Activated CD4-positive, alpha-beta memory T cell treated with anti-CD3 and anti-CD28 coated beads for 36 hours (primary cell): ENCODE measurements at regions of chr16 and their contacts with region 1.

Region 1: DNA sequence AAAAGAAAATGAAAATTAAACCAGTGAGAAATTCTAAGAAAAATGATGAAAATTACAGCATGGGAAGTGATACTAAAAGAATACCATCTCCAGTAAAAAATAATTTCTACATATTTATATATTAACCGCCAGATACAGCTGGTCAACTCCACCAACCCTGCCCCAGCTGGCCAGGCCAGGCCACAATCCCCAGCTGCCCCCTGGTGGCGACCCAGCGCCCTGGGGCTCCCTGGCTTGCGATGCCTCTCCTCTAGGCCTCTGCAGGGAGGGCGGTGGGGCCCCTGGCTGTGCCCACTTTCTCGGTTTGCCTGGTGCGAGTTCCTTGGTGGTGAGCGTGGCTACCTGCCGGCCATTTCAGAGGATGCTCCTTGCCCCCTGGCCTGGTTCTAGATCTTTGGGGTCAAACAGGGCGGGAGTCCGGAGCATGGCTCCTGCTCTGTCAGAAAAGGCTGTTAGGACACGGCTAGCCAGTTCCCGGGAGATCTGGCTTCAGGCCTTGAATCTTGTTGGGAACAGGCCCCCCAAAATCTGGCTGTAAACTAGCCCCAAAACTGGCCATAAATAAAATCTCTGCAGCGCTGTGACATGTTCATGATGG is 14.5 kb downstream of the GLIS2 start:
- DNase-seq: peak; percentile 79
- H3K4me3 Mint-ChIP-seq: no peak overlapping the region
- H3K27ac Mint-ChIP-seq: no peak overlapping the region
- H3K4me1 Mint-ChIP-seq: peaks cover 6% of the 10 kb centered on the region
- H3K27me3 Mint-ChIP-seq: no peaks in the 10 kb centered on the region

Region 2: GRCh38 chr16:4244254-4245076 is 85.9 kb before region 1 on chr16:
- CTCF ChIA-PET with region 1: no interaction called
- POLR2A ChIA-PET with region 1: no interaction called
- intact Hi-C with region 1: no loop called
- DNase-seq: no peak
- H3K4me3 Mint-ChIP-seq: no peak overlapping the region
- H3K27ac Mint-ChIP-seq: no peak overlapping the region
- H3K4me1 Mint-ChIP-seq: no peaks in the 10 kb centered on the region
- H3K27me3 Mint-ChIP-seq: no peaks in the 10 kb centered on the region

Region 3: GRCh38 chr16:4261557-4262172 is 68.7 kb before region 1 on chr16:
- CTCF ChIA-PET with region 1: interaction called, 14 read pairs
- POLR2A ChIA-PET with region 1: no interaction called
- intact Hi-C with region 1: no loop called
- DNase-seq: peak; percentile 59
- H3K4me3 Mint-ChIP-seq: no peak overlapping the region
- H3K27ac Mint-ChIP-seq: no peak overlapping the region
- H3K4me1 Mint-ChIP-seq: peaks cover 3% of the 10 kb centered on the region
- H3K27me3 Mint-ChIP-seq: no peaks in the 10 kb centered on the region

Region 4: DNA sequence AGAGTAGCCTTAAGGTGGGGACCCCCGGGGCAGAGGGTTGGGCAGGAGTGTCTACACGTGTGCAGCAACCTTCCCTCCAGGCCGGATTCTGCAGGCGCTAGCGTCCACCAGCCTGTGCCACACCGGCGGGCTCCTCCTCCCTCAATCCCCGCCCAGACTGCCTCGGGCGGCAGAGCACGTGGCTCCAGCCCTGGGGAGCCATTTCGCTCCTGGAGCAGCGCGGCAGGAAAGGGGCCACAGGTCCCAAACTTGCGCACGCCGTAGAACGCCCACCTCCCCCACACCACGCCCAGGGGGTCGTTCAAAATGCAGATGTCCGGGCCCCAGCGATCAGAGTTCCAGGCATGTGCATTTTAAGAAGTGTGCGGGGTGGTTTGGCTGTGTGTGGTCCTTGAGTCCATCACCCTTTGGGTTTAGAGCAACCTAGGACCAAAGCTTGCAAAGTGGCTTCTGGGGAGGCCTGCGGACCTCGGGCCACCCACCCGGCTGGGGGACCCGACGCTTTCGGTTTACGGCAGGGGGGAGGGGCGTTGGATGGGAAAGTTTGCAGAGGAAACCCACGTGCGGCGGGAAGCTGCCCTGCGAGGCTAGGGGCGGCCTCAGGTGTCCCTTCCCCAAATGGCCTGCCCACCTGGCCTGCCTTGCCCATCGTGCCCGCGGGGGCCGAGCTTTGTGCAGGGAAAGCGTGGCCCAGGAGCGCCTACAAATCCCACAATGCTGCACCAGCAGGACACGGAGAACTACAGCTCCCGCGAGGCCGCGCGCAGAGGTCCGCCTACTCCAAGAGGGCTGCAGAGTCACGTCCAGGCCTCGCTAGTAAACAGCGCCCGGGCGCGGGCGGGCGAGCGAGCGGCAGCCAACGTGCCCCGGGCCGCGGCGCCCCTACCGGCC is 59.0 kb before region 1 on chr16:
- CTCF ChIA-PET with region 1: interaction called, 10 read pairs
- POLR2A ChIA-PET with region 1: no interaction called
- intact Hi-C with region 1: loop called (anchors 5 kb)
- DNase-seq: peak; percentile 94
- H3K4me3 Mint-ChIP-seq: peak overlapping the region; percentile 86
- H3K27ac Mint-ChIP-seq: peak overlapping the region; percentile 93
- H3K4me1 Mint-ChIP-seq: peaks cover 14% of the 10 kb centered on the region
- H3K27me3 Mint-ChIP-seq: no peaks in the 10 kb centered on the region

Region 5: DNA sequence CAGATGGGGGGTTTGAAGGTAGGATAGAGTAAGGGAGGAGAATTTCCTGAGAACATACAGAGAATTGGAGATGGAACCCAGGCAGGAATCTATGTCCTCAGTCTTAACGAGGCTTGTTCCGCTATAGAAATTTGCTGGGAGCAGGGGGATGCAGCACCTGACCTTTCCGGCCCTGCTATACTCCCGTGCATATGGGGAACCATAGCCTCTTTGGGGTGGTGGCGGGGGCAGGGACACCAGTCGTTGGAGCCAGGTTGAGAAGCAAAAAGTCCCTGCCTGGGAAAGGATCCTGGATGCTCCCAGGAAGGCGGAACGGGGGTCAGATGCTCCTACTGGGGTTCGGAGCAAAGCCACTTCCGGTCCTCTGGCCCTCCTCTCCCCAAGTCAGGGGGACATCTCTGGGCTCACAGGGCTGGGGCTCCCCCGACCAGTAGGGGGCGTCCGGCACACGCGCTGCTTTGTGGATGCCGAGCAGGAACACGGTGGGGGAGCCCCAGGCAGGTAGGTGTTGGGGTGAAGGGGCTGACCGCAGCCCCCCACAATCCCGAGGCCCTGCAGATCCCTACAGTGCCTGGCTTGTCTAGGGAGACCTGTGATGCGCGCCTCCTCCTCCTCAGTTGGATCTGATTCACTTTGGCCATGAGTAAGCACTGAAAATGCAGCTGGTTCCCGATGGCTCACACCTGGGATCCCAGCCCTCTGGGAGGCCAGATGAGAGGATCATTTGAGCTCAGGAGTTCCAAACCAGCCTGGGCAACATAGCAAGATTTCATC is 42.0 kb before region 1 on chr16:
- CTCF ChIA-PET with region 1: interaction called, 28 read pairs
- POLR2A ChIA-PET with region 1: no interaction called
- intact Hi-C with region 1: loop called (anchors 1 kb)
- DNase-seq: peak; percentile 82
- H3K4me3 Mint-ChIP-seq: no peak overlapping the region
- H3K27ac Mint-ChIP-seq: no peak overlapping the region
- H3K4me1 Mint-ChIP-seq: peaks cover 5% of the 10 kb centered on the region
- H3K27me3 Mint-ChIP-seq: peaks cover 10% of the 10 kb centered on the region